ENCODE measurements at regions of chrX and their contacts with region 1.

Region 1: GRCh38 chrX:79169484-79169883 is 25.0 kb downstream of the GPR174 start:
- DNase-seq: no peak
- H3K4me3 Mint-ChIP-seq: peak overlapping the region; percentile 38
- H3K27ac Mint-ChIP-seq: peak overlapping the region; percentile 80
- H3K4me1 Mint-ChIP-seq: peaks cover 46% of the 10 kb centered on the region
- H3K27me3 Mint-ChIP-seq: no peaks in the 10 kb centered on the region

Region 2: DNA sequence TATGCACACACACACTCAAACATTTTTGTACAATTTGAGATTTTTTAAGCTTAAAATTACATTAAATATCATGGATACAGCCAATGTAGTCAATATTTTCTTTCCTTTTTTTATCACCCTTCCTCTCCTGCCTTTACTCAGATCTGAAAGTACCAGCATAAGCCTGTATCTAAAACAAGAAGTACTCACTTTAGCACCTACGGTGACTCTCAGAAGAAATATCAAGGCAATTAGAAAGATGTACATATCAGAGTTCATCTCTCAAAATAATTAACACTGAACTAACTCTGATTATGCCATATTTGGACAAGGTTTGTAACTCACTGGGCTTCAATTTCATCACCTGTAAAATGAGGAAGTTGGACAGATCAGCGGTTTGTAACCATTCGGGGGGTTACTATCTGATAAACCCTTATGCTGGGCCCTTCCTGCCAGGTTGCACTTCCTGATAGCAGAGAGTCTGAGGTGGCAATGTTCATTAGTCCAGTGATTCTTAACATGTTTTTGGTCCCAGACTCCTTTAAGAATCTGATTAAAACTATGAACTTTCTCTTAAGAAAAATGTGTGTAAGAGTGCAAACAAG is 30.7 kb before region 1 on chrX:
- intact Hi-C with region 1: no loop called
- DNase-seq: no peak
- H3K4me3 Mint-ChIP-seq: peak overlapping the region; percentile 32
- H3K27ac Mint-ChIP-seq: peak overlapping the region; percentile 20
- H3K4me1 Mint-ChIP-seq: peaks cover 23% of the 10 kb centered on the region
- H3K27me3 Mint-ChIP-seq: no peaks in the 10 kb centered on the region

Region 3: GRCh38 chrX:79182616-79183015 is 13.1 kb after region 1 on chrX:
- intact Hi-C with region 1: loop called (anchors 1 kb)
- DNase-seq: peak; percentile 57
- H3K4me3 Mint-ChIP-seq: peak overlapping the region; percentile 60
- H3K27ac Mint-ChIP-seq: peak overlapping the region; percentile 88
- H3K4me1 Mint-ChIP-seq: peaks cover 26% of the 10 kb centered on the region
- H3K27me3 Mint-ChIP-seq: no peaks in the 10 kb centered on the region